Activated naive CD4-positive, alpha-beta T cell treated with anti-CD3 and anti-CD28 coated beads for 36 hours (primary cell): ENCODE measurements at regions of chr1 and their contacts with region 1.

Region 1: GRCh38 chr1:151790071-151790940 is at the start of gene TDRKH:
- DNase-seq: peak; percentile 99
- H3K4me3 Mint-ChIP-seq: peak within 1 kb of the TSS; percentile 98
- H3K27ac Mint-ChIP-seq: peak within 1 kb of the TSS; percentile 81
- H3K4me1 Mint-ChIP-seq: peaks cover 22% of the 10 kb centered on the region
- H3K27me3 Mint-ChIP-seq: no peaks in the 10 kb centered on the region
- total RNA-seq, gene TDRKH: 22.0 to 22.5 TPM

Region 2: GRCh38 chr1:151762941-151763921 is 27.1 kb before region 1 on chr1 and contains the start of gene MRPL9:
- CTCF ChIA-PET with region 1: interaction called, 4 read pairs
- intact Hi-C with region 1: loop called (anchors 1 kb)
- DNase-seq: peak; percentile 91
- H3K4me3 Mint-ChIP-seq: peak within 1 kb of the TSS; percentile 86
- H3K27ac Mint-ChIP-seq: peak within 1 kb of the TSS; percentile 90
- H3K4me1 Mint-ChIP-seq: peaks cover 17% of the 10 kb centered on the region
- H3K27me3 Mint-ChIP-seq: no peaks in the 10 kb centered on the region
- total RNA-seq, gene MRPL9: 157 to 160 TPM

Region 3: GRCh38 chr1:151820940-151821339 is 30.6 kb after region 1 on chr1:
- CTCF ChIA-PET with region 1: no interaction called
- intact Hi-C with region 1: loop called (anchors 2 kb)
- DNase-seq: peak; percentile 56
- H3K4me3 Mint-ChIP-seq: no peak overlapping the region
- H3K27ac Mint-ChIP-seq: peak overlapping the region; percentile 78
- H3K4me1 Mint-ChIP-seq: peaks cover 42% of the 10 kb centered on the region
- H3K27me3 Mint-ChIP-seq: no peaks in the 10 kb centered on the region

Region 4: GRCh38 chr1:151828965-151829698 is 38.8 kb after region 1 on chr1:
- CTCF ChIA-PET with region 1: interaction called, 4 read pairs
- intact Hi-C with region 1: loop called (anchors 2 kb)
- DNase-seq: peak; percentile 35
- H3K4me3 Mint-ChIP-seq: peak overlapping the region; percentile 41
- H3K27ac Mint-ChIP-seq: peak overlapping the region; percentile 81
- H3K4me1 Mint-ChIP-seq: peaks cover 52% of the 10 kb centered on the region
- H3K27me3 Mint-ChIP-seq: no peaks in the 10 kb centered on the region

Region 5: GRCh38 chr1:151909150-151910149 is 119.1 kb after region 1 on chr1 and contains the start of gene THEM4:
- CTCF ChIA-PET with region 1: no interaction called
- intact Hi-C with region 1: loop called (anchors 2 kb)
- DNase-seq: peak; percentile 97
- H3K4me3 Mint-ChIP-seq: peak within 1 kb of the TSS; percentile 75
- H3K27ac Mint-ChIP-seq: peak within 1 kb of the TSS; percentile 81
- H3K4me1 Mint-ChIP-seq: peaks cover 36% of the 10 kb centered on the region
- H3K27me3 Mint-ChIP-seq: no peaks in the 10 kb centered on the region
- total RNA-seq, gene THEM4: 20.1 to 22.0 TPM